Vagina (tissue), 2 donors: ENCODE measurements at regions of chr1 and their contacts with region 1.

Region 1: GRCh38 chr1:16055613-16056520 is 12.3 kb downstream of the CLCNKB start:
- DNase-seq: no peak
- H3K4me3 ChIP-seq: no peak overlapping the region
- H3K27ac ChIP-seq: no peak overlapping the region
- H3K4me1 ChIP-seq: no peaks in the 10 kb centered on the region
- H3K27me3 ChIP-seq: no peaks in the 10 kb centered on the region
- CTCF ChIP-seq: peak; percentile 84 to 92 (median 92)
- POLR2A ChIP-seq: no peak

Region 2: DNA sequence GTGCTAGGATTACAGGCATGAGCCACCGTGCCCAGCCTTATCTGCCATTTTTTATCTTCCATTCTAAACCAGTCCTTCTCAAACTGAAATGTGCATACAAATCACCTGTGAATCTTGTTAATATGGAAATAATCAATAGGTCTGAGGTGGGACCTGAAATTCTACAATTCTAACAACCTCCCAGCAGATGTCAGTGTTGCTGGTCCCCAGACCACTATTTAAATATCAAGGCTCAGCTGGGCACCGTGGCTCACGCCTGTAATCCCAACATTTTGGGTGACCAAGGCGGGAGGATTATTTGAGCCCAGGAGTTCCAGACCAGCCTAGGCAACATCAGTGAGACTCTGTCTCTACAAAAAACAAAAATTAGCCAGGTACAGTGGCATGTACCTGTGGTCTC is 252.5 kb before region 1 on chr1:
- intact Hi-C with region 1: loop called (anchors 5 kb)
- DNase-seq: no peak
- H3K4me3 ChIP-seq: no peak overlapping the region
- H3K27ac ChIP-seq: no peak overlapping the region
- H3K4me1 ChIP-seq: peaks cover 26% of the 10 kb centered on the region
- H3K27me3 ChIP-seq: no peaks in the 10 kb centered on the region
- CTCF ChIP-seq: peak in 1 of 3 experiments; percentile 22
- POLR2A ChIP-seq: no peak

Region 3: GRCh38 chr1:16009030-16009709 is 46.7 kb before region 1 on chr1:
- intact Hi-C with region 1: loop called (anchors 10 kb)
- DNase-seq: no peak
- H3K4me3 ChIP-seq: no peak overlapping the region
- H3K27ac ChIP-seq: no peak overlapping the region
- H3K4me1 ChIP-seq: peaks cover 20% of the 10 kb centered on the region
- H3K27me3 ChIP-seq: no peaks in the 10 kb centered on the region
- CTCF ChIP-seq: peak; percentile 92 to 98 (median 98)
- POLR2A ChIP-seq: no peak

Region 4: DNA sequence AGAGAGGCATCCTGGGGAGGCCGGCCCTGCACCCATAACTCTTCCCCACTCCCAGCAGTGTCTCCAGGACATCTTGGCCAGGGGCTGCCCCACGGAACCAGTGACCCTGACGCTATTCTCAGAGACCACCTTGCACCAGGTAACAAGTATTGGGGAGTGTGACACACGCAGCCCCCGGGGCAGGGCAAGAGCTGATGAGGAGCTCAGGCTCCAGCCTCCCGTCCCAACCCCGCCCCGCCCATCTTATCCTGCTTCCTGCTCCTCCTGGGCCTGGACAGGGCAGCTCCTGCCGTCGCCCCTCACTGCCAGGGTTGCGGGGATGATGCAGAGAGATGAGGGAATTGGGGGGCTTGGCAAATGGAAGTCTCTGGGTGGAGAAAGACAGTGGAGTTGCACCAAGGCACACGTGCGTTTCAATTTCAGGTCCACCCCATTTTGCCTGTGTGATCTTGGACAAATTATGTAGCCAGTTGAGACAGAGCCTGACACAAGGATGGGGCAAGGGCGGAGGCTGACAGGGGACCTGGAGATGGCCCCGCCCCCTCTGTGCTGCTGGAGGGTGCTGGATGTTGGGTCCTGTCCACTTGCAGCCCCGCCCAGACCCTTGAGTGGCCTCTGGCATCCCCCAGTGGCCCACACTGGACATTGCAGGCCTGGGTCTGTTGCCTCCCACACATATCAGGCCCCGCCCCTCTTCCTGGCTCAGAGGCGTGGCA is 23.3 kb before region 1 on chr1:
- intact Hi-C with region 1: loop called (anchors 2 kb)
- DNase-seq: no peak
- H3K4me3 ChIP-seq: no peak overlapping the region
- H3K27ac ChIP-seq: no peak overlapping the region
- H3K4me1 ChIP-seq: peaks cover 9% of the 10 kb centered on the region
- H3K27me3 ChIP-seq: no peaks in the 10 kb centered on the region
- CTCF ChIP-seq: peak; percentile 88 to 94 (median 88)
- POLR2A ChIP-seq: no peak

Region 5: DNA sequence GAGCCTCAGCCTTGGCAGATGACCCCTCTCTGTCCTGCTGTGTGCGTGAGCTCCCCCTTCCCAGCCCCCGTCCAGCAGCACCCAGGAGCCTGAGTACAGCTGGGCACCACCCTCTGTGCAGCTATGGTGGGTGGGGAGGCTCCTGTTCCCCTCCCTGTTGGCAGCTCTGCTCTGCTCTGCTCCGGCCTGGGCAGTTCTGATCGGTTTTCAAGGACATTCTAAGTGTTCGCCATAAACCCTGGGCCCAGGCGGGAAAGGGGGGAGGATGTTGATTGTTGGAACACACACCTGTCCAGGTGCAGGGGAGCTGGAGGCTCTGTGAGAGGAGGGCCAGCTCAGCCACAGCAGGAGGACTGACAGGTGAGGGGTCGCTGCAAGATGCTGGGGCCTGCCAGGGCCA is 12.3 kb before region 1 on chr1 and contains the start of gene CLCNKB:
- intact Hi-C with region 1: no loop called
- DNase-seq: no peak
- H3K4me3 ChIP-seq: no peak within 1 kb of the TSS
- H3K27ac ChIP-seq: no peak within 1 kb of the TSS
- H3K4me1 ChIP-seq: peaks cover 6% of the 10 kb centered on the region
- H3K27me3 ChIP-seq: no peaks in the 10 kb centered on the region
- CTCF ChIP-seq: no peak
- POLR2A ChIP-seq: no peak
- total RNA-seq, gene CLCNKB: not detected

Region 6: GRCh38 chr1:16101623-16102022 is 45.8 kb after region 1 on chr1:
- intact Hi-C with region 1: no loop called
- DNase-seq: no peak
- H3K4me3 ChIP-seq: no peak overlapping the region
- H3K27ac ChIP-seq: no peak overlapping the region
- H3K4me1 ChIP-seq: no peaks in the 10 kb centered on the region
- H3K27me3 ChIP-seq: no peaks in the 10 kb centered on the region
- CTCF ChIP-seq: no peak
- POLR2A ChIP-seq: no peak

Region 7: GRCh38 chr1:16217061-16217785 is 161.4 kb after region 1 on chr1:
- intact Hi-C with region 1: no loop called
- DNase-seq: peak in 1 of 2 donors; percentile 97
- H3K4me3 ChIP-seq: peak overlapping the region; percentile 55 to 60
- H3K27ac ChIP-seq: peak overlapping the region; percentile 81
- H3K4me1 ChIP-seq: peaks cover 28% of the 10 kb centered on the region
- H3K27me3 ChIP-seq: no peaks in the 10 kb centered on the region
- CTCF ChIP-seq: no peak
- POLR2A ChIP-seq: peak in 1 of 2 donors; percentile 57